Dorsolateral prefrontal cortex (tissue), 120 donors: ENCODE measurements at regions of chr15 and their contacts with region 1.

Region 1: DNA sequence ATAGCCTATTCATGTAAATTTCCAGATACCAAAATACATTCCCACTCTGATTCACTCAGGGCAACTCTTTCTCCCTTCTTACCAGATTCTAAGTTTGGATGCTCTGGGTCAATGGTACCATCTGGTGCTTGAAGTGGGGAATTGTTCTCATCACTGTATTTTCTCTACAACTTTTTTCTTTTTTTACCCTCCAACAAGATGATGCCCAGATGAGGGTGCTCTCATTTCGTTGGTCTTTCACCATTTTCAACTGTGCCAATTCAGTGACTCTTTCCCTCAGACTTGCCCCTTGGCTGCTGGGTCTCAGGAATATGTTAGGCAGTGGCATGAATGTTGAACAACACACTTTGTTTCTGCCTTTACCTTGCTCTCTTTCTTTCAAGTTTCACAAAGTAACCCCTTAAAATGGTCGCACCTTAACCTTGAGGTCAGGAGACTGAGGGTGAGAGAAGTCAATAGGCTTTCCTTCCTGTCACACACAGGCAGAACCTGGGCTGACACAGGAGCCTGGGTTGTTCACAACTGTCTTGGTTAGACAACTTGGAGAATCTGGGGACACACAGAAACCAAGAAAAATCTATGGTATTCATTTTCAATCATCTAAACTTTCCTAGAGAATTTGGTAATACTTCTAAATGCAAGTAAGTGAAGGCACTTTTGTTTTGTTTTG is 330.7 kb upstream of the SLCO3A1 start:
- DNase-seq: peak in 1 of 10 donors; percentile 26
- H3K4me3 ChIP-seq: no peak overlapping the region
- H3K27ac ChIP-seq: peak overlapping the region in 46 of 59 donors; percentile 3 to 85 (median 56)
- H3K27me3 ChIP-seq: no peaks in the 10 kb centered on the region
- CTCF ChIP-seq: peak in 55 of 56 donors; percentile 47 to 85 (median 69)

Region 2: DNA sequence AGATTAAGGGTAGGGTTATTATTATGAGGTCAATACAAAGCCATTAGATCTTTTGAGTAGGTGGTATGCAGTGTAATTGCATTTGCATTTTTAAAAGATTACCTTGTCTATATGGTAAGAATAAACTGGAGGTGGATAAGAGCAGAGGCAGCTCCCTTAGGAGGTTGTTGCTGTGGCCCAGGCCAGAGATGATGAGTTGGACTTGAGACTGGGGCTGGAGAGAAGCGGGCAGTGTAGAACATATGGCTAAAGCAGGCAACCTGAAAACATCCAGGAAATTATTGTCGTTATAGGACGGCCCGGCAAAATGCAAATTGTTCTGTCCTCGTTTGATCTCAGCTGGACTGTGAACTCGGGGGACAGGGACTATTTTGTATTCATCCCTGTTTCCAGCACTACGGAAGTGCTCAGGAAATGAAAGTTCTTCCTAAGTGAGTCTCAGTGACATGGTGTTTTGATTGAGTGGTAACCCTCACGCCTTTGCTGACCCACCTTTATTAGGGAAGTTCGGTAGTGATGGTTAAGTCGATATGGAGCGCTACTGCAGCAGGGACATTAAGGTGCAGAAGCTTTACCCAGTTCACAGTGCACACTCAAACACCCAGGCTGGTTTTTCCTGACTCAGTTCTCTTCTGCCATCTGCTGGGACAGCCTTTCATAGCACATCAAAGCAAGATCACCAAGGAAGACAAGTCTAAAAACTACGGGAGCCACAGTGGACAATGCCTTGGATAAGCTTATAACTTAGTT is 473.2 kb before region 1 on chr15:
- intact Hi-C with region 1: loop called in 1 of 2 experiments (anchors 10 kb)
- DNase-seq: peak in 8 of 10 donors; percentile 52 to 86 (median 60)
- H3K4me3 ChIP-seq: peak overlapping the region in 34 of 59 donors; percentile 4 to 55 (median 34)
- H3K27ac ChIP-seq: no peak overlapping the region
- H3K27me3 ChIP-seq: no peaks in the 10 kb centered on the region
- CTCF ChIP-seq: peak; percentile 38 to 83 (median 69)

Region 3: GRCh38 chr15:91302588-91303439 is 220.0 kb before region 1 on chr15:
- intact Hi-C with region 1: loop called (anchors 1 to 2 kb)
- DNase-seq: peak in 4 of 10 donors; percentile 21 to 46 (median 34)
- H3K4me3 ChIP-seq: peak overlapping the region in 13 of 59 donors; percentile 1 to 43 (median 20)
- H3K27ac ChIP-seq: no peak overlapping the region
- H3K27me3 ChIP-seq: peaks cover 0 to 10% (median 0%) of the 10 kb centered on the region in 45 donors
- CTCF ChIP-seq: peak; percentile 51 to 90 (median 78)

Region 4: GRCh38 chr15:91627473-91628278 is 104.9 kb after region 1 on chr15:
- intact Hi-C with region 1: no loop called
- DNase-seq: peak in 3 of 10 donors; percentile 17 to 48 (median 40)
- H3K4me3 ChIP-seq: no peak overlapping the region
- H3K27ac ChIP-seq: peak overlapping the region in 5 of 59 donors; percentile 2 to 43 (median 37)
- H3K27me3 ChIP-seq: no peaks in the 10 kb centered on the region
- CTCF ChIP-seq: no peak

Region 5: DNA sequence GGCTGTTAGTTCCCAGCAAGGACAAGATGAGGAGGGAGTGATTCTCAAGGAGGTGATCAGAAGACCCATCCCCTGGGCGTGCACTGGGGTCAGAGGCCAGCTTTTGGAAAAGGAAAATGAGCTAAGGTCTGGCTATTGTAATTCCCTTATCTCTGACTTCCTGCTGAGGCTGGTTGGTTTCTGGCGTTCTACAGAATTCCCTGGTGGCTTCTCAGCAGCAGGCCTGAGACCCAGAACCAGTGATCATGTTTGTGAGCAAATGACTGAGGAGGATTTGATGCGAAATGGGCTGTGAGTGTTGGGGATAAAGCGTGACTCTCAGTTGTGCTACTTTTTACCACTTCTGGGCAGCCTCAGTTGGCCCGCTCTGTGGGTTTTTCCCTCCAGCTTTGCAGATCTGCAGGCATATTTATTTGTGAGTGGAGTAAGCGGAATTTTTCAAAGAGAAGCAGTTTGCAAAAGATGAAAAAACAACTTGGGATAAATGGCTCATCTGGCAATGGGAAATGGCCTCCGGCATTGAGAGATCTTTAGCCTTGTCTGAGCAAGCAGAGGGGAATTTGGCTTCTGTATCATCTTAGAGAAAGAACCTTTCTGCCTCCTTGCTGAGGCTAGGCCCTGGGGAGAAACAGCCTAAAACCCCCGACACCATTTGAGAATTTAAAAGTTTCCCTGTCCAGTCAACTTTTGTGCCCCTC is 433.4 kb after region 1 on chr15:
- intact Hi-C with region 1: loop called in 1 of 2 experiments (anchors 10 kb)
- DNase-seq: no peak
- H3K4me3 ChIP-seq: no peak overlapping the region
- H3K27ac ChIP-seq: peak overlapping the region in 44 of 59 donors; percentile 1 to 71 (median 54)
- H3K27me3 ChIP-seq: no peaks in the 10 kb centered on the region
- CTCF ChIP-seq: no peak